ENCODE measurements at regions of chr4 and their contacts with region 1.

Region 1: DNA sequence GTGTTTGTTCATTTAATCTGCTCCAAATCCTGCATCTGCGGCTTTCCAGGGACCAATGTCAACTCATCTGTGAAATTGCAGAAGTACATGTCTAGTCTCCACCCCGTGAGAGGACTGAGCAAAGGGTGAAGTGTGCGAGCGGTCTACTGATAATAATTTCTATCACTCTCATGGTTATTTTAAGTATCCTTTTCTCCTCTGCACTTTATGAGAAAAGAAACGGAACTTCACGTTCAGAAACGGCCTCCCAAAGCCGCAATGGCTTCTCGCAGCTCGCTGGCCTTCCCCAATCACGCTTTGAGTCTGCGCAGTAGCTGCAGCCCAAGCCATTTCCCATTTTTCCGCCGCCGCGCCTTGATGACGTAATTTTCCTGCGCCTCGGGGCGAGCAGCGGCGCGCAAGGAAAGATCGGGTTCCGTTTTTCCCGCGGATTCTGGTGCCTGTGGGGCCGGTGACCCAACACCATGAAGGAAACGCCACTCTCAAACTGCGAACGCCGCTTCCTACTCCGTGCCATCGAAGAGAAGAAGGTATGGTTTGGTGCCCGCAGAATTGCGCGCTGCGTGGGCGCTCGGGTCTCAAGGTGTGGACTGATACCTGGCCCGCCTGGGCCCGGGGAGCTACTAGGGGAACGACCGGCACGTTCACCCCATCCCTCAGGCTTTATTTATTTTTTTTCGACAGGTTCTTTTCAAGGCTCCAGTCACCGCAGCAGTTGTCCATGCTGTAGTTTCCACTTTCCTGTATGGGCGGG is at the start of gene EXOSC9:
- DNase-seq: peak; percentile 94
- ATAC-seq: peak; percentile 93
- H3K4me3 ChIP-seq: peak within 1 kb of the TSS; percentile 67
- H3K27ac ChIP-seq: peak within 1 kb of the TSS; percentile 89
- H3K4me1 ChIP-seq: peaks cover 2% of the 10 kb centered on the region; the same call in 1 of the 2 replicates
- H3K27me3 ChIP-seq: no peaks in the 10 kb centered on the region
- CTCF ChIP-seq: no peak
- POLR2A ChIP-seq: peak; percentile 88
- RAD21 ChIP-seq: 0 out of 2 replicates have a peak, but pooled peaks have one; percentile 5
- total RNA-seq, gene EXOSC9: 47.5 and 85.8 TPM in 2 replicates

Region 2: DNA sequence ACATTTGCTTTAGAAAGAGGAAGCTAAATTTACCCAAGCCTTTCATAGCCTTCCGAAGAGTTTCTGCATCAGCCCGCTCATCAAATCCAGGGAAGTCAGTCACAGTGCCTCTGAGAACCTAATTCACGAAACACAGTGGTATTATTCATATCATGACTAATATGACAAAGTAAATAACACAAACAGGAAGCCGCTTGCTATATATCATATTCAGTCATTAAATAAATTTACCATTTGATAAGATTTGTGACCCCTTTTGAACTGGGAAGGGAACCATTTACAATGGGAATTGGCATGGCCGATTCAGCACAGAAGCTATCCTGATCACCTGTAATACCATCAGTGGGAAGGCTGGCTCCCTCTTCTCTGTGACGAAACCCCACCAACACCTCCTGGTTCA is 114.9 kb before region 1 on chr4:
- CTCF ChIA-PET with region 1: no interaction called
- POLR2A ChIA-PET with region 1: no interaction called
- dilution Hi-C with region 1: no loop called
- in situ Hi-C with region 1: loop called (anchors 10 kb)
- intact Hi-C with region 1: loop called (anchors 5 kb)
- DNase-seq: no peak
- ATAC-seq: no peak
- H3K4me3 ChIP-seq: no peak overlapping the region
- H3K27ac ChIP-seq: peak overlapping the region; percentile 41
- H3K4me1 ChIP-seq: peaks cover 35% of the 10 kb centered on the region
- H3K27me3 ChIP-seq: no peaks in the 10 kb centered on the region
- CTCF ChIP-seq: no peak
- POLR2A ChIP-seq: no peak
- RAD21 ChIP-seq: no peak

Measured in IMR-90 (cell line).